Activated naive CD4-positive, alpha-beta T cell treated with anti-CD3 and anti-CD28 coated beads, Interleukin-2, amount 10 ng/mL, durations not matched to agents 7 days and 5 days (primary cell): ENCODE measurements at regions of chr5 and their contacts with region 1.

Region 1: GRCh38 chr5:171207256-171207847 is 101.7 kb upstream of the TLX3 start:
- DNase-seq: no peak
- H3K4me3 Mint-ChIP-seq: no peak overlapping the region
- H3K27ac Mint-ChIP-seq: no peak overlapping the region
- H3K4me1 Mint-ChIP-seq: no peaks in the 10 kb centered on the region
- H3K27me3 Mint-ChIP-seq: peaks cover 4% of the 10 kb centered on the region

Region 2: GRCh38 chr5:171342362-171343111 is 135.2 kb after region 1 on chr5:
- CTCF ChIA-PET with region 1: interaction called, 36 read pairs
- DNase-seq: peak; percentile 52
- H3K4me3 Mint-ChIP-seq: no peak overlapping the region
- H3K27ac Mint-ChIP-seq: no peak overlapping the region
- H3K4me1 Mint-ChIP-seq: no peaks in the 10 kb centered on the region
- H3K27me3 Mint-ChIP-seq: peaks cover 11% of the 10 kb centered on the region